HCT116 (cell line): ENCODE measurements at regions of chr1 and their contacts with region 1.

Region 1: DNA sequence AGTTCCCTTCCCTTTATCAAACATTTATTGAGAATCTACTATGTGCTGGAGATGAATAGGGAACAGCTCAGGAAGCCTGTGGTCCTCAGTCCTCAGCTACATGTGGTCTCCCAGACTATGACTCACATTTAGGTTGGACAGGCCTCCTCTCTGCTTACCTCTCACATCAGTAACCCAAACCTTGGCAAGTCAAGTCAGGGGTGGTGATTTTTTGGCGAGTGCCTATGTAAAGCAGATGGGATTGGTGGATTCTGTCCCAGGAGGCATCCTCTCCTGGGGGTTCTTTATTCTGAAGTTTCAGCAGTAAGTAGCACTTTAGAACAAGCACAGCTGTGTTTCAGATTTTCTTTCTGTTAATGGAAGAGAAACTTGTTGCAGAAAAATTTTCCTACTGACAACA is 241.3 kb downstream of the PRDM2 start:
- DNase-seq: no peak
- ATAC-seq: no peak
- H3K4me3 ChIP-seq: no peak overlapping the region
- H3K27ac ChIP-seq: no peak overlapping the region
- H3K4me1 ChIP-seq: no peaks in the 10 kb centered on the region
- H3K27me3 ChIP-seq: no peaks in the 10 kb centered on the region
- CTCF ChIP-seq: no peak
- POLR2A ChIP-seq: no peak
- RAD21 ChIP-seq: no peak

Region 2: DNA sequence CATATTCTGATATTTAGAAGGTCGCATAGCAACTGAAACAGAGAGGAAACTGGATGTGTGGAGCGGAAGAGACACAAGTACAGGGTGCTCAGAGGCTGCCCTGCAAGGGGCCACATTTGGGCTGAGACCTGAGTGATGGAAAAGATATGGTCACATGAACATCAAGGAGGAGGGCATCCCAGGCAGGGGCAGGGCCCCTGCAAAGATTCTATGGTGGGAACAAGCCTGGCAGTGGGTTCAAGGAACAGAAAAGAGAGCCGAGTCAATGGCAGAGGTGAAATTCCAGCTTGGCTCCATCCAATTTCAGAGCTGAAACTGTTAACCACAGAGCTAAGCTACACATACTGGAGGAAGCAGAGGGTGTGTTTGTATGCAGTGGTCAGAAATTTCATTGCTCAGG is 13.6 kb before region 1 on chr1:
- CTCF ChIA-PET with region 1: no interaction called
- POLR2A ChIA-PET with region 1: no interaction called
- RAD21 ChIA-PET with region 1: no interaction called
- intact Hi-C with region 1: loop called (anchors 2 kb)
- DNase-seq: no peak
- ATAC-seq: no peak
- H3K4me3 ChIP-seq: no peak overlapping the region
- H3K27ac ChIP-seq: no peak overlapping the region
- H3K4me1 ChIP-seq: peaks cover 0 to 2% of the 10 kb centered on the region in 2 experiments; a peak in 2 of 4 replicates
- H3K27me3 ChIP-seq: peaks cover 4% of the 10 kb centered on the region; the same call in 1 of the 2 replicates
- CTCF ChIP-seq: no peak
- POLR2A ChIP-seq: no peak
- RAD21 ChIP-seq: no peak